ENCODE measurements at regions of chr9 and their contacts with region 1.

Region 1: GRCh38 chr9:136482793-136483588 is at the start of gene SEC16A:
- DNase-seq: peak; percentile 99
- ATAC-seq: peak; percentile 68
- H3K4me3 Mint-ChIP-seq: peak within 1 kb of the TSS; percentile 93
- H3K27ac Mint-ChIP-seq: peak within 1 kb of the TSS; percentile 99
- H3K4me1 Mint-ChIP-seq: peaks cover 31% of the 10 kb centered on the region
- H3K27me3 Mint-ChIP-seq: no peaks in the 10 kb centered on the region
- total RNA-seq, gene SEC16A: 88.0 to 96.7 TPM

Region 2: DNA sequence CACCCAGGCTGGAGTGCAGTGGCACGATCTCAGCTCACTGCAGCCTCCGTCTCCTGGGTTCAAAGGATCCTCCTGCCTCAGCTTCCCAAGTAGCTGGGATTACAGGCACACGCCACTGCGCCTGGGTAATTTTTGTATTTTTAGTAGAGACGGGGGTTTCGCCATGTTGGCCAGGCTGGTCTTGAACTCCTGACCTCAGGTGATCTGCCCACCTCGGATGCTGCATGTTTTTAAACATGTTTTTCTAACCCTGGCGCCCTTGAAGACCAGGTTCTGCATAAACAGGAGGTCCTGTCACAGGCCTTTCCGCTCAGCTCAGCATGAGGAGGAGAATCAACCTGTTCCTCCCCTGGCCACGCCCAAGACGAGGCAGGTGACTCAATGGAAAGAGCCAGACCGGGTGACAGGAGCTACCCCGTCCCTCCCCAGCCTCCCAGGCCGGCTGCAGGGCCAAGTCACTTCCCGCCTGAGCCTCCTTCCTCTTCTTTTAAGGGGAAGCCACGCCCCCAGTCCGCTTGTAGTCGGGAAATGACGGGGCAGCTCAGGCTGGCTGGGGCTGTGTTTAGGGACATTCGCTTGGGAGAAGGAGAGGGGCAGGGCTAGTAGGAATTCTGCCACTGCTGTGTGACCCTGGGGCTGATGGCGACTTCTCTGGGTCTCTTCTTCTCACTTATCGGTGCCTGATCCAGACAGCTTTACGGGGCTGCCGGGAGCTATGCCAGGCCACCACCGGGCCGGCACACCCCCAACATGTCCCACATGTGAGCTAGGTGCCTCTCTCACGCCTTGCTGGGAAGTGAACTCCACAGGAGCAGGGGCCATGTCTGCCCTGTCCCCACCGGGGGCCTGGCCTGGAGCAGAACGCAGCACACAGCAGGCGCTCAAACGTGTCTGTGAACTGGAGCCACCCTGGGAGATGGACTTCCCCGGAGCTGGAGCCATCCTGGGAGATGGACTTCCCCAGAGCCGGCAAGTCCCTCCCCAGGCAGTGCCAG is 56.7 kb after region 1 on chr9:
- CTCF ChIA-PET with region 1: interaction called, 33 read pairs
- DNase-seq: peak; percentile 98
- ATAC-seq: peak; percentile 84
- H3K4me3 Mint-ChIP-seq: peak overlapping the region; percentile 72
- H3K27ac Mint-ChIP-seq: peak overlapping the region; percentile 99
- H3K4me1 Mint-ChIP-seq: peaks cover 66% of the 10 kb centered on the region
- H3K27me3 Mint-ChIP-seq: no peaks in the 10 kb centered on the region

Region 3: GRCh38 chr9:136644598-136645351 is 161.8 kb after region 1 on chr9:
- CTCF ChIA-PET with region 1: interaction called, 17 read pairs
- DNase-seq: peak; percentile 81
- ATAC-seq: peak; percentile 93
- H3K4me3 Mint-ChIP-seq: no peak overlapping the region
- H3K27ac Mint-ChIP-seq: no peak overlapping the region
- H3K4me1 Mint-ChIP-seq: no peaks in the 10 kb centered on the region
- H3K27me3 Mint-ChIP-seq: peaks cover 35% of the 10 kb centered on the region

Region 4: GRCh38 chr9:136671646-136672430 is 188.8 kb after region 1 on chr9:
- CTCF ChIA-PET with region 1: interaction called, 16 read pairs
- DNase-seq: peak; percentile 55
- ATAC-seq: peak; percentile 46
- H3K4me3 Mint-ChIP-seq: no peak overlapping the region
- H3K27ac Mint-ChIP-seq: no peak overlapping the region
- H3K4me1 Mint-ChIP-seq: no peaks in the 10 kb centered on the region
- H3K27me3 Mint-ChIP-seq: peaks cover under 1% of the 10 kb centered on the region

Measured in activated CD8-positive, alpha-beta memory T cell treated with anti-CD3 and anti-CD28 coated beads, Interleukin-2, amount 10 ng/mL, durations not matched to agents 7 days and 5 days (primary cell).